ENCODE measurements at regions of chr1 and their contacts with region 1.

Region 1: DNA sequence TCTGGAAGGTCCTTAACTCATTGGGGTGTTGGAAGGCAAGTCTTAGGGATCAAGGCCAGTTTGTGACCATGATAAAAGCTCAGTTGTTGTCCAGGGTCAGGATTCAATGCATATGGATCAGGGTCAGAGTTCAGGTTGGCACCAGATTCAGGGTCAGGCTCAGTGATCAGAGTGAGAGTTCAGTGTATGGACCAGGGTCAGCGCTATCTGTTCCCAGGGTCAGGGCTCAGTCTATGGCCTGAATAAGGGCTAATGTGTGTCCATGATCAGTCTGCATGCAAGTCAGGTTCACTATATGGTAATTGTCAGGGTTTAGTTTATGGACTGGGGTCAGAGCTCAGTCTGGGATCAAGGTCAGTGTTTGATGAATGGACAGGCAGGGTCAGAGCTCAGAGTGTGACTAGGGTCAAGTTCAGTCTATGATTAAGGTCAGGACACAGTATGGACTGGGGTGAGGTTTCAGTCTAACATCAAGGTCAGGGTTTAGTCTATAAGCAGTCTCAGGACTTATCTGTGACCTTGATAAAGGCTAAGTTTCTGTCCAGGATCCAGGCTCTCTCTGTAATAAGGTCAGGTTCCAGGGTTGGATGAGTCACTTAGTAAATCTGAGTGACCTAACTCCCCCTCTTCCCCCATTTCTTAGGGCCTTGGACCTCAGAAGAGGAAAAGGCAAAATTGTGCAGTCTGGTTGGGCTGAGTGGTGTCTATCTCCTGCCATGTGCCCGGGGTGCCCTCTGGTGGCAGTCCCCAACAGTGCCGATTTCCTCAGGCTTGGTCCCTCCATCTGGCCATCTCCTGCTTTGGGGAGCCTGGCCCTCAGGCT is 23.8 kb downstream of the KNCN start:
- DNase-seq: peak; percentile 94
- H3K4me3 Mint-ChIP-seq: no peak overlapping the region
- H3K27ac Mint-ChIP-seq: no peak overlapping the region
- H3K4me1 Mint-ChIP-seq: peaks cover 19% of the 10 kb centered on the region
- H3K27me3 Mint-ChIP-seq: peaks cover 21% of the 10 kb centered on the region

Region 2: GRCh38 chr1:46442317-46443161 is 85.1 kb before region 1 on chr1:
- intact Hi-C with region 1: loop called (anchors 1 kb)
- DNase-seq: peak; percentile 92
- H3K4me3 Mint-ChIP-seq: peak overlapping the region; percentile 85
- H3K27ac Mint-ChIP-seq: peak overlapping the region; percentile 1
- H3K4me1 Mint-ChIP-seq: peaks cover 13% of the 10 kb centered on the region
- H3K27me3 Mint-ChIP-seq: peaks cover 36% of the 10 kb centered on the region

Region 3: GRCh38 chr1:46477153-46477929 is 50.3 kb before region 1 on chr1:
- intact Hi-C with region 1: loop called (anchors 1 kb)
- DNase-seq: peak; percentile 93
- H3K4me3 Mint-ChIP-seq: no peak overlapping the region
- H3K27ac Mint-ChIP-seq: no peak overlapping the region
- H3K4me1 Mint-ChIP-seq: no peaks in the 10 kb centered on the region
- H3K27me3 Mint-ChIP-seq: peaks cover 48% of the 10 kb centered on the region

Region 4: DNA sequence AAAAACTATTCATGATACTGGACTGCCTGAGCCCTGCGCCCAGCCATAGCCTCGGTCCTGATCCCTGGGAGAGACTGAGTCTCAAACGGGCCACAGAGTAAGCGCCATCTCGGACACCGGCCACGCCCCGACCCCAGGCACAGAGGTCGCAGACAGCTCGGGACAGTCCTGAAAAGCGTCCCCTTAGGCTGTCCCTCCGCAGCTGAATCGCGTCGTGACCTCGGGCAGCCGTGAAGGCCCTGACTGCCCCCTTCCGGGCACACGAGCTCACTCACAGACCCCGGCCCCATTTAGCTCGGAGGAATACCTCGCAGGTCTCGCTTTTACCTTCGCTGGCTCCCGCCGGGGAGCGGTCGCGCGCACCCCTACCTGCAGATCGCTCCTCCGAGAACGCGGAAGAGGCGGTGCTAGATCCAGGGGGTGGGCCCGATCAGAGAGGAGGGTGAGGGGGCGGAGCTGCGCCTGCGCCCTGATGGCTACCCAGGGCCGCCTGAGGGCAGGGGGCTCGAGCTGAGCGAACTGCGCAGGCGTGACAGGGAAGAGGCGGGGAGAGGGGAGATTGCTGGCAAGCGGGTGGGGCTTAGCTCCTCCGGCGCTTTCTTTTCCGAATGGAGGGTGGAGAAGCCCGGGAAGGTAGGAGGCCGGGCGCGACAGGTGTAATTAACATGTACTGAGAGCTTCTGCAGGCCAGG is 76.3 kb after region 1 on chr1 and contains the start of gene MKNK1:
- intact Hi-C with region 1: loop called (anchors 5 kb)
- DNase-seq: peak; percentile 100
- H3K4me3 Mint-ChIP-seq: peak within 1 kb of the TSS; percentile 92
- H3K27ac Mint-ChIP-seq: peak within 1 kb of the TSS; percentile 87
- H3K4me1 Mint-ChIP-seq: peaks cover 60% of the 10 kb centered on the region
- H3K27me3 Mint-ChIP-seq: no peaks in the 10 kb centered on the region
- total RNA-seq, gene MKNK1: 41.8 and 42.5 TPM in 2 replicates

Region 5: GRCh38 chr1:46616277-46617107 is 88.8 kb after region 1 on chr1 and contains the start of gene MOB3C:
- intact Hi-C with region 1: no loop called
- DNase-seq: peak; percentile 91
- H3K4me3 Mint-ChIP-seq: peak within 1 kb of the TSS; percentile 94
- H3K27ac Mint-ChIP-seq: peak within 1 kb of the TSS; percentile 90
- H3K4me1 Mint-ChIP-seq: peaks cover 55% of the 10 kb centered on the region
- H3K27me3 Mint-ChIP-seq: no peaks in the 10 kb centered on the region
- total RNA-seq, gene MOB3C: 15.0 and 17.8 TPM in 2 replicates

Region 6: GRCh38 chr1:46724991-46725735 is 197.5 kb after region 1 on chr1:
- intact Hi-C with region 1: loop called (anchors 1 kb)
- DNase-seq: peak; percentile 91
- H3K4me3 Mint-ChIP-seq: no peak overlapping the region
- H3K27ac Mint-ChIP-seq: no peak overlapping the region
- H3K4me1 Mint-ChIP-seq: no peaks in the 10 kb centered on the region
- H3K27me3 Mint-ChIP-seq: peaks cover 25% of the 10 kb centered on the region

Measured in activated CD4-positive, alpha-beta T cell treated with anti-CD3 and anti-CD28 coated beads, Interleukin-2, amount 10 ng/mL, durations not matched to agents 24 days and 14 days (primary cell).